ENCODE measurements at regions of chrX and their contacts with region 1.

Region 1: DNA sequence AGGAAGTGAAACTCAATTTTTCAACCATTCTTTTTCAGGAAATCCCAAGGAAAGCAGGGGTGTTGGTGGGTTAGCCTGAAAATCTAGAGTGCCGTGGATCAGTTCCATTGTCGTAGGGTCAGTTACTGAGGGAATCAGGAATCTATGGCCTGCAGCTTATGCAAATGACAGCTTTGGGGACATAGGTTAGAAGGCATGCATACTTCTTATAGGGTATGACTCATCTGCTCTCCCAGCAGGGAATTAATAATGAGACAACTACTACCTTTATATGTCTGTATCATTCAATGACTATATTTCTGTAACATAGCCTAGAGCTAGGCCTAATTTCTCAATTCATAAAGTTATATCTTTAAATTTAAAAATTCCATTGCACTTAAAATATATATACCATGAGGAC is 36.6 kb downstream of the ZNF41 start:
- DNase-seq: no peak
- ATAC-seq: no peak
- H3K4me3 Mint-ChIP-seq: no peak overlapping the region
- H3K27ac Mint-ChIP-seq: no peak overlapping the region
- H3K4me1 Mint-ChIP-seq: no peaks in the 10 kb centered on the region
- H3K27me3 Mint-ChIP-seq: no peaks in the 10 kb centered on the region

Region 2: GRCh38 chrX:47413179-47413594 is 33.2 kb before region 1 on chrX:
- CTCF ChIA-PET with region 1: no interaction called
- POLR2A ChIA-PET with region 1: no interaction called
- intact Hi-C with region 1: loop called in 1 of 2 experiments (anchors 5 kb)
- DNase-seq: no peak
- ATAC-seq: no peak
- H3K4me3 Mint-ChIP-seq: no peak overlapping the region
- H3K27ac Mint-ChIP-seq: no peak overlapping the region
- H3K4me1 Mint-ChIP-seq: no peaks in the 10 kb centered on the region
- H3K27me3 Mint-ChIP-seq: no peaks in the 10 kb centered on the region

Region 3: GRCh38 chrX:47475476-47475875 is 29.0 kb after region 1 on chrX:
- CTCF ChIA-PET with region 1: no interaction called
- POLR2A ChIA-PET with region 1: no interaction called
- intact Hi-C with region 1: no loop called
- DNase-seq: no peak
- ATAC-seq: peak; percentile 66
- H3K4me3 Mint-ChIP-seq: no peak overlapping the region
- H3K27ac Mint-ChIP-seq: no peak overlapping the region
- H3K4me1 Mint-ChIP-seq: peaks cover 23% of the 10 kb centered on the region
- H3K27me3 Mint-ChIP-seq: no peaks in the 10 kb centered on the region

Measured in activated CD4-positive, alpha-beta T cell treated with anti-CD3 and anti-CD28 coated beads for 36 hours (primary cell).